GM13977 (cell line): ENCODE measurements at regions of chr17 and their contacts with region 1.

Region 1: DNA sequence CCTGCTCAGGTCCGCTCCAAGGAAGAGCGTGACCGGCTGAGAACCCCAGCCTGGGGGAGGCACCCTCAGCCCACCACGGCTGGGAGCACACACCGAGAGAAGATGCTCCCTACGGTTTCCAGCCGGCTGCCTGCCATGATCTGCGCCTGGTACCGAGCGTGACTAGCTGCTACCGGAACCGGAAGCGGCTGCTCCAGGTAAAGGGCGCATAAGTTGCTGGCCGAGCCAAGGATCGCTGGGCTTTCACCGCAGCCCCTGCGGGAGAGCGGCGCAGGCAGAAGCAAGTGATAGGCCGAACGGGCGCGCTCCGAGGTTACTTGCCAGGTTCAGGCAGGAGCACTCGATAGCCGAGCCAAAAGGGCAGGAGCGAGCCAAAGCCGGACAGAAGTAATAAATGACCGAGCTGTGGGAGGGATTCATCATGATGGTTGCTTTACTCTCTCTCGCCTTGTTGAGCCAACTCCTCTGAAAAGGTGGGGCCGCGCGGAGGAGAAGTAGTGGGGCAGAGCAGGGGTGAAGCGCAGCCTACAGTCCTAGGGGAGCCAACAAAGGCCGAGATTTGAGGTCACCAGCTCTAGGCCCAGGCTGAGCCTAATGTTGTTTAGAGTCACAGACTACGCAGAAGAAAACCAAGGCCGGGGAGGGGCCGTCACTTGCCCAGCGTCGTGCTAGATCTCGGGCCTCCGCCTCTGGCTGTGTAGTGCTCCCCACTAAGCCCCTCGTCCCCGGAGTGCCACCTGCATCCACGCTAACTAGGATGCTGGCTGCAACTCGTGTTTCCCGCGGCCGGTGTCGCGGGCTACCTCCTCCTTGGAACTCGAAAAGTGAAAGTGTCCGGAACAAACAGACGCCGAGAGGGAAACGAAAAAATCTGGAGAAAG is at the start of gene MRPS23:
- DNase-seq: peak; percentile 96
- CTCF ChIP-seq: no peak

Region 2: DNA sequence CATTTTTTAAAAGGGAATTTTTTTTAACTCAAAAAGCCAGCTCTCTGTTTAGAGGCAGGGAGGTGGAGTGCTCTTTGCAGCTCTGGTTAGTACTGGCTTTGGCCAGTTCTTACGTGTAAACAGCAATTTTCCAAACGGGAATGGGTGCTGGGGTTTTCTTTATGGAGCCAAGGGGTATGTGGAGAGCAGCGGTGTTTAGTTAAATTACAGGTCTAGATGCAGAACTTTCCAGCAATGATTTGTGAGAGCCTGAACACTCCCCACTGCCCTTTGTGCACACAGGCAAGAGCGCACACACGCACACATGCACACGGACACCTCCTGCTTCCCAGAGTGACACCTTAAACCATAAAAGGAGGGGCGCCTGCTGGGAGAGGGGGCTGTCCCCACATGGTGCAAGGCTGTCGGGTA is 453.6 kb before region 1 on chr17:
- in situ Hi-C with region 1: no loop called
- DNase-seq: no peak
- CTCF ChIP-seq: no peak

Region 3: GRCh38 chr17:58006924-58007780 is 157.0 kb after region 1 on chr17 and contains the start of gene SRSF1:
- in situ Hi-C with region 1: loop called (anchors 10 kb)
- DNase-seq: peak; percentile 91
- CTCF ChIP-seq: no peak

Region 4: GRCh38 chr17:58109196-58109595 is 259.1 kb after region 1 on chr17:
- in situ Hi-C with region 1: loop called (anchors 10 kb)
- DNase-seq: no peak
- CTCF ChIP-seq: no peak